Dorsolateral prefrontal cortex (tissue), 120 donors: ENCODE measurements at regions of chr9 and their contacts with region 1.

Region 1: DNA sequence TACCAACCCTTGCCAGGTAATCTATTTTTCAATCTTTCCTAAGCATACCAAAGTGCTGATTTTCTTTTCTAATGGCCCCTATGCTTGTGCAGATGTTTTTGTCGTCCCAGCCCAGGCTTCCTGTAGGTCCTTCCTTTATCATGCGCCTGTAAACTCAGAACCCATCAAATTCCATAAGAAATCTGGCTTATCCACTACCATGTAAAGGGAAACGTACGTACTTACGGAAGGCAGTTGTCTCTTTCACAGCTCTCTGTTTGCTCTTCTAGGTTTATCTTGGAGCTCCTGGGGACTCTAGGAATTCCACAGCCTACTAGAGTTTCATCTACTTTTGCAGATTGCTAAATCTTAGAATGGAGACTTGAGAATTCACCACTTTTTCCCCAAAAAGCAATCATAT is 9.0 kb downstream of the BRINP1 start:
- DNase-seq: no peak
- H3K4me3 ChIP-seq: peak overlapping the region in 19 of 59 donors; percentile 4 to 41 (median 16)
- H3K27ac ChIP-seq: peak overlapping the region in 1 of 59 donors; percentile 2
- H3K27me3 ChIP-seq: no peaks in the 10 kb centered on the region
- CTCF ChIP-seq: no peak

Region 2: GRCh38 chr9:118595719-118596305 is 764.4 kb before region 1 on chr9:
- intact Hi-C with region 1: loop called (anchors 5 to 10 kb)
- DNase-seq: peak in 9 of 10 donors; percentile 40 to 72 (median 53)
- H3K4me3 ChIP-seq: no peak overlapping the region
- H3K27ac ChIP-seq: no peak overlapping the region
- H3K27me3 ChIP-seq: no peaks in the 10 kb centered on the region
- CTCF ChIP-seq: peak in 55 of 56 donors; percentile 22 to 73 (median 58)

Region 3: DNA sequence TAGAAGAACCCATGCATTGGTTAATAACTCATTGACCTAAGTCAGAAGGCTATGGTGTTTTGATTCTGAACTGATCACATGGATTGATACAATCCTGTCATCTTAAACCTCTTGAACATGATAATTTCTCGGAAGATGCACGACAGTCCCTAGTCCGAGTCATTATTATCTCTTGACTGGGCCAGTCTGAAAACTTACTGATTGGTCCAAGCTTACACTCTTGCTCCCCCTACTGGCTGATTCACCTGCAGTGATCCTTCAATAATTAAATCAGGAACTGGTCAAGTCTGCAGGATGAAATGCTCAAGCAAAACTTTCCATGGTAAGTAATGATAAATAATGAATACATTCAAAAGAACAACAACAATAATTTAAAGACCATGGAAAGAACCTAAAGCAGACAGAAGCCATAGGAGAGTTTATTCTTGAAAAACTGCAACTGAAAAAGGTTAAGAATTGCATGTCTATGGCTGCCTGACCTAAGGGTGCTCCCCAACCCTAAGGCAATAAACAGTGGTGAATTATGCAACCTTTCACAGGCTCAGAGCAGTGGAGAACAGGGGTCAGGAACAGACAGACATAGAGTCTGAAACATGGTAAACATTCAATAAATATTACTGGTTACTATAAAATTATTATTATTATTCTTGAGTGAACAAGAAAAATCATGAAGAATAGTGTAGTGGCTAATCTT is 70.3 kb before region 1 on chr9:
- intact Hi-C with region 1: loop called in 1 of 2 experiments (anchors 5 kb)
- DNase-seq: peak in 1 of 10 donors; percentile 56
- H3K4me3 ChIP-seq: no peak overlapping the region
- H3K27ac ChIP-seq: peak overlapping the region in 6 of 59 donors; percentile 6 to 44 (median 12)
- H3K27me3 ChIP-seq: no peaks in the 10 kb centered on the region
- CTCF ChIP-seq: peak in 55 of 56 donors; percentile 48 to 75 (median 65)